Panc1 (cell line): ENCODE measurements at regions of chr22 and their contacts with region 1.

Region 1: GRCh38 chr22:45246060-45246985 is 5.6 kb upstream of the KIAA0930 start:
- DNase-seq: peak; percentile 71
- ATAC-seq: peak; percentile 86
- H3K4me3 ChIP-seq: no peak overlapping the region
- H3K27ac ChIP-seq: no peak overlapping the region; the same call in 1 of the 2 replicates
- H3K4me1 ChIP-seq: peaks cover 9% of the 10 kb centered on the region
- H3K27me3 ChIP-seq: no peaks in the 10 kb centered on the region
- CTCF ChIP-seq: no peak

Region 2: DNA sequence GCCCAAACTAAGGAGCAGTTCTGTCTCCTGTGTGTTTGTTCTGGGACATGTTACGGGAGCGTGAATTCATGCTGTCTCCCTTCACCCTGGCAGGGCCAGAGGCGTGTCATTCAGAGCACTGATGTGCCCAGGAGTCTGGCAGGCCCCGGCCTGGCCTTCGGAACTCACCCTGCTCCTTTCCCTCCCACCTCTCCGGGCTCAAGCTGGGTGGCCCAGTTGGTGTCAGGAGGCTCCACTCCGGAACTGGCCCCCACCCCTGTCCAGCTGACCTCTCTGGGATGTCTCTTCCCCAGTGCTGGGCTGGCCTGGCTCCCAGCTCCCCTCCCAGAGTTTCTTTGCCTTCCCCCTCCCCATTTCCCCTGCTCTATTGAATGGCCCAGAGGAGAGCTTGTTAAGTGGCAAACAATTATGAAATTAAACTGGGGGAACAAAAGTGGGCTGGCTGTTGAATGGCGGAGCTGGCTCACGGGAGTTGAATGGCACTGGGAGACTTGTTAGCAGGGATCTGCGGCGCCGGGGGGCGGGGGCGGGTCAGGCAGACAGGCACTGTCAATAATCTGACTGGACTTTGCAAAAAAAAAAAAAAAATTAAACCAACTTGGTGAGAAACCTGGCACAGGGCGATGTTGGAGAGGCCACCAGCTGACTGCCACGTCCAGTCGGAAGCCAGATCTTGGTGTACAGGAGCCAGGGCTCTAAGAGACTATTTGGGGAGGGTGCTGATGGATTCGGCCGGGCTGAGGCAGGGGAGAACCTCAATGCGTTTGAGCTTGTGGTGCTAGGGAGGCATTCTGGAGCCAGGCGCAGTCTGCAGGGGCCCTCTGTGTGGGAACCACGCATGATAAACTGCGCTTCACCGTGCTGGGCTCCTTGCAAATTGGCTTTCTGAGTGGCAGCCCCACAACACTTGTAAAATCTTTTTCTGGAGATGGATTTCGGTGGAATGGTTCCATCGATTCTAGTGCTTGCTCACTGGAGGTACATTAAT is 1833.2 kb before region 1 on chr22:
- CTCF ChIA-PET with region 1: no interaction called
- POLR2A ChIA-PET with region 1: interaction called, 16 read pairs
- in situ Hi-C with region 1: no loop called
- intact Hi-C with region 1: no loop called
- DNase-seq: no peak
- ATAC-seq: no peak
- H3K4me3 ChIP-seq: no peak overlapping the region
- H3K27ac ChIP-seq: no peak overlapping the region
- H3K4me1 ChIP-seq: no peaks in the 10 kb centered on the region
- H3K27me3 ChIP-seq: peaks cover 5% of the 10 kb centered on the region; the same call in 1 of the 2 replicates
- CTCF ChIP-seq: no peak